Activated CD4-positive, alpha-beta memory T cell treated with anti-CD3 and anti-CD28 coated beads, Interleukin-2, amount 10 ng/mL, durations not matched to agents 7 days and 5 days (primary cell): ENCODE measurements at regions of chr12 and their contacts with region 1.

Region 1: GRCh38 chr12:20963762-20964161 is 153.3 kb downstream of the SLCO1B3 start:
- DNase-seq: no peak
- H3K4me3 Mint-ChIP-seq: no peak overlapping the region
- H3K27ac Mint-ChIP-seq: no peak overlapping the region
- H3K4me1 Mint-ChIP-seq: no peaks in the 10 kb centered on the region
- H3K27me3 Mint-ChIP-seq: no peaks in the 10 kb centered on the region

Region 2: DNA sequence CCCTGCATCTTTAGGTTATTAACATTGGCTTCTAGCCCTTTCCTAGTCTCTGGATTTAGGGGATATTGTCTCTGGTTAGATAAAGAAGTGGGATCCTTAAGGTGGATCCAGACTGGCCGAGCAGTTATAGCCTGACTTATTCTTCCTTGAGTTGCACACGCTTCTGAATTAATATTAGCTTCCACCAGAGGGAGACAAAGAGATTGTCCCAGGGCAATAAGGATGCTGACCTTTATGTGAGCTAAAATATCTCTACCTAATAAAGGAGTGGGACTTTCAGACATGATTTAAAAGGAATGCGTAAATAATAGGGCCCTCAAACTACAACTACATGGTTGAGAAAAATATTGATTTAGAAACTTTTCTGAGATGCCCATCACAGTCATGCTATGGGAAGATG is 13.5 kb before region 1 on chr12:
- CTCF ChIA-PET with region 1: interaction called, 11 read pairs
- POLR2A ChIA-PET with region 1: no interaction called
- DNase-seq: no peak
- H3K4me3 Mint-ChIP-seq: no peak overlapping the region
- H3K27ac Mint-ChIP-seq: no peak overlapping the region
- H3K4me1 Mint-ChIP-seq: no peaks in the 10 kb centered on the region
- H3K27me3 Mint-ChIP-seq: no peaks in the 10 kb centered on the region

Region 3: GRCh38 chr12:21054334-21054733 is 90.6 kb after region 1 on chr12:
- CTCF ChIA-PET with region 1: no interaction called
- POLR2A ChIA-PET with region 1: no interaction called
- DNase-seq: no peak
- H3K4me3 Mint-ChIP-seq: no peak overlapping the region
- H3K27ac Mint-ChIP-seq: no peak overlapping the region
- H3K4me1 Mint-ChIP-seq: no peaks in the 10 kb centered on the region
- H3K27me3 Mint-ChIP-seq: no peaks in the 10 kb centered on the region

Region 4: DNA sequence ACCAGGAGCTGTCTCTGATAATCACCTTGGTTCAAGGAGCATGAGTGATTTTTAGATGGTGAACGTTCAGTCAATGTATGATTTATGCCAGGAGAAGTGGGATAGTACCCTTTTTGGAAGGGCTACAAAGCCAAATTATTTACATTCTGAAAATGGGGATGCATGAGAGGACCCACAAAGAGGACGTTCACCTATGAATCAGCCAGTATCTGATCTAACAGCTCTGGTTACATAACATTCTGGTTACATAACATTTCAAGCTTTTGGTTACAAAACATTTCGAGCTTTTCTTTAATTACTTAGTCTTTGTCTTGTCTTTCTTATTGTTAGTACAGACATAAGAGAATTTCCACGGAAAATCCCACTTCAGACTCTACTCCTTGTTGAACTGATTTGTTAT is 302.2 kb after region 1 on chr12:
- CTCF ChIA-PET with region 1: no interaction called
- POLR2A ChIA-PET with region 1: no interaction called
- DNase-seq: no peak
- H3K4me3 Mint-ChIP-seq: no peak overlapping the region
- H3K27ac Mint-ChIP-seq: no peak overlapping the region
- H3K4me1 Mint-ChIP-seq: no peaks in the 10 kb centered on the region
- H3K27me3 Mint-ChIP-seq: peaks cover 12% of the 10 kb centered on the region